Body of pancreas (tissue), 4 donors: ENCODE measurements at regions of chr10 and their contacts with region 1.

Region 1: GRCh38 chr10:97838091-97838490 is 11.6 kb upstream of the GOLGA7B start:
- DNase-seq: no peak
- ATAC-seq: no peak
- H3K4me3 ChIP-seq: no peak overlapping the region
- H3K27ac ChIP-seq: no peak overlapping the region
- H3K4me1 ChIP-seq: peaks cover 12% of the 10 kb centered on the region
- H3K27me3 ChIP-seq: no peaks in the 10 kb centered on the region
- CTCF ChIP-seq: no peak
- POLR2A ChIP-seq: no peak

Region 2: DNA sequence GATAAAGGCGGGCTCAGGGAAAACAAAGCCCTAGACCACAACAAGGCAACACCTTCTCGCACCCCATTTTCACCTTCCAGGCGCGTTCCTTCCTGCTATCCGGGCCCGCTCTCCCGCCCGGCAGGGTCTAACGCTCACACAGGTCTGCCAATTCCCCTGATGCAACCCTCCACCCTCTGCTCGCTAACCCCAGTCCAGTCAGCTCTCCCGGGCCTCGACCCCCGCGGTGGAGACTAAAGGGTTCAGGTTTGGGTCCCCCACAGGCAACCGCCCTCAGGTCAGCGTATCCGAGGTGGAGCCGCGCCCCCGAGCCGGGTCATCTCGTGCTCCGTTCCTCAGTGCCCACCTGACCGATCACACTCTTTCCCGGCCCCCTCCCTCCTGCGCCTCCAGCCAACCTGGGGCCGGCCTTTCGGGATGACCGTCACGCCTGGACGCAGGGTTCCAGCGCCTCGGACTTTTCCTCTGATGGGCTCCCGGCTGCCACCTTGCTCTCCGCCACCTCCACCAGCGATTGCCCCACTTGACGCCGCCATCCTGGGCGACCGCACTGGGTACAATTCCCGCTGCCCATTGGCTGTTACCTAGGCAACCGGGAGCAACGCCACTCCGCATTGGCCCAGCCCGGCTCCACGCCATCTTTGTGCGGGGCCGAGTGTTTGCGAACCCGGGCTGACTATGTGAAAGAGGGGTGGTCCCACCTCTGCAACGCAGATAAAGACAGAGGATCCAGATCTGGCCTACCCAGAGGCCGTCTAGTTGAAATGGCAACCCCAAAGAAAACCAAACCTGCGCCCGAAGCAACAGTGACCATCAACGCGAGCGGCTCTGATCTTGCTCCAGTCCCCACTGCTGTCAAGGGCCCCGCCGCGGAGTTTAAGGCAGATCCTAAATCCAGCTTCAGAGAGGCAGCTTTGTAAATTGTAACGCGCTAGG is 204.9 kb before region 1 on chr10 and contains the start of gene MORN4:
- intact Hi-C with region 1: no loop called
- DNase-seq: peak; percentile 94 to 96 (median 95)
- ATAC-seq: peak; percentile 100
- H3K4me3 ChIP-seq: peak within 1 kb of the TSS; percentile 38 to 91
- H3K27ac ChIP-seq: peak within 1 kb of the TSS; percentile 52 to 71 (median 54)
- H3K4me1 ChIP-seq: peaks cover 11% of the 10 kb centered on the region
- H3K27me3 ChIP-seq: no peaks in the 10 kb centered on the region
- CTCF ChIP-seq: no peak
- POLR2A ChIP-seq: peak in 2 of 3 donors; percentile 53 to 59
- total RNA-seq, gene MORN4: 4.9 to 8.3 TPM

Region 3: DNA sequence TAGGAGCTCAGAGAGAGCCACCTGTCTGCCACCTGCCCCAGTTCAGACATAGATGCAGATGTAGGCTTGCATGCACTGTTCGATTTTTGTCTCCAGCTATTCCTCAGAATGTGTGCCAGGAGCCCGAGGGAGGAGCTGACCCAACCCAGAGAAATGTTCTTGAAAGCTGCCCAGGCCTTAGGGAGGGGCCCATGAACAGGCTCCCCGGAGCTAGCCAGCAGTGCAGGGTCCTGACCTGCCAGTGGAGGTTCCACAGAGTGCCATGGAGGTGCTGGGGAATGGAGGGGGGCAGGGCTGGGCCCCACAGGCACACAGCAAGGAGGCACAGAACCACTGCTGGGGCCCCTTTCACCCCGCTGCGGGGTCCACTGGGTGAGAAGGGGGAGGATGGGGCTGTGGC is 36.7 kb before region 1 on chr10:
- intact Hi-C with region 1: loop called (anchors 5 kb)
- DNase-seq: no peak
- ATAC-seq: peak; percentile 16
- H3K4me3 ChIP-seq: no peak overlapping the region
- H3K27ac ChIP-seq: no peak overlapping the region
- H3K4me1 ChIP-seq: peaks cover 12% of the 10 kb centered on the region
- H3K27me3 ChIP-seq: no peaks in the 10 kb centered on the region
- CTCF ChIP-seq: no peak
- POLR2A ChIP-seq: no peak